Heart right ventricle (tissue), 16 donors: ENCODE measurements at regions of chr6 and their contacts with region 1.

Region 1: GRCh38 chr6:50699051-50699775 is 14.1 kb upstream of the TFAP2D start:
- DNase-seq: no peak
- ATAC-seq: no peak
- H3K4me3 ChIP-seq: no peak overlapping the region
- H3K27ac ChIP-seq: no peak overlapping the region
- H3K4me1 ChIP-seq: no peaks in the 10 kb centered on the region
- H3K27me3 ChIP-seq: peaks cover 0 to 19% (median 3%) of the 10 kb centered on the region in 7 donors
- CTCF ChIP-seq: no peak

Region 2: DNA sequence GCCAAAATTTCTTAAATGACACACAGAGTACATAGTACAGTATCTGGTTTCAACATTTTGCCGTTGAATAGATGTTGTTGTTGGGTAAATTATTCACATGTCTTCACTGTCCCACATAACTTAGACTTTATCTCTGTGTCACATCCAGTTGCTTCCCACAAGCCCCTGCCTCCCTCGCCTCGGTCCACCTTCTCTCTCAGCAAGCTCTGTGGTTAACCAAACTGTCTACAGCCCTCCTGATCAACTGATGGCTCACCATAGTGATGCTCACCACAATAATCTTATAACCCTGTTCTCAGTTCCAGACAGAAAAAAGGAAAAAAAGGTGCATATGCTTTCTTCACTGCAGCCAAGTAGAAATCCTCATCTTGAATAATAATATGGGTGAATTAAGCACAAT is 1522.1 kb after region 1 on chr6:
- intact Hi-C with region 1: loop called in 1 of 10 experiments (anchors 5 kb)
- DNase-seq: no peak
- ATAC-seq: no peak
- H3K4me3 ChIP-seq: no peak overlapping the region
- H3K27ac ChIP-seq: no peak overlapping the region
- H3K4me1 ChIP-seq: no peaks in the 10 kb centered on the region
- H3K27me3 ChIP-seq: peaks cover 0 to 5% (median 0%) of the 10 kb centered on the region in 7 donors
- CTCF ChIP-seq: no peak